ENCODE measurements at regions of chr1 and their contacts with region 1.

Region 1: GRCh38 chr1:54229281-54229891 is 29.4 kb downstream of the MRPL37 start:
- DNase-seq: peak; percentile 62
- H3K4me3 Mint-ChIP-seq: no peak overlapping the region
- H3K27ac Mint-ChIP-seq: peak overlapping the region; percentile 11
- H3K4me1 Mint-ChIP-seq: peaks cover 39% of the 10 kb centered on the region
- H3K27me3 Mint-ChIP-seq: no peaks in the 10 kb centered on the region

Region 2: GRCh38 chr1:53681977-53682685 is 547.3 kb before region 1 on chr1:
- CTCF ChIA-PET with region 1: no interaction called
- POLR2A ChIA-PET with region 1: no interaction called
- intact Hi-C with region 1: no loop called
- DNase-seq: peak; percentile 54
- H3K4me3 Mint-ChIP-seq: no peak overlapping the region
- H3K27ac Mint-ChIP-seq: no peak overlapping the region
- H3K4me1 Mint-ChIP-seq: peaks cover 4% of the 10 kb centered on the region
- H3K27me3 Mint-ChIP-seq: peaks cover 8% of the 10 kb centered on the region

Region 3: GRCh38 chr1:54121482-54122134 is 107.8 kb before region 1 on chr1:
- CTCF ChIA-PET with region 1: no interaction called
- POLR2A ChIA-PET with region 1: no interaction called
- intact Hi-C with region 1: no loop called
- DNase-seq: peak; percentile 78
- H3K4me3 Mint-ChIP-seq: no peak overlapping the region
- H3K27ac Mint-ChIP-seq: no peak overlapping the region
- H3K4me1 Mint-ChIP-seq: peaks cover 5% of the 10 kb centered on the region
- H3K27me3 Mint-ChIP-seq: peaks cover 2% of the 10 kb centered on the region

Region 4: GRCh38 chr1:54287176-54287650 is 57.8 kb after region 1 on chr1:
- CTCF ChIA-PET with region 1: no interaction called
- POLR2A ChIA-PET with region 1: no interaction called
- intact Hi-C with region 1: loop called (anchors 2 kb)
- DNase-seq: peak; percentile 87
- H3K4me3 Mint-ChIP-seq: peak overlapping the region; percentile 3
- H3K27ac Mint-ChIP-seq: peak overlapping the region; percentile 85
- H3K4me1 Mint-ChIP-seq: peaks cover 81% of the 10 kb centered on the region
- H3K27me3 Mint-ChIP-seq: no peaks in the 10 kb centered on the region